ENCODE measurements at regions of chr4 and their contacts with region 1.

Region 1: DNA sequence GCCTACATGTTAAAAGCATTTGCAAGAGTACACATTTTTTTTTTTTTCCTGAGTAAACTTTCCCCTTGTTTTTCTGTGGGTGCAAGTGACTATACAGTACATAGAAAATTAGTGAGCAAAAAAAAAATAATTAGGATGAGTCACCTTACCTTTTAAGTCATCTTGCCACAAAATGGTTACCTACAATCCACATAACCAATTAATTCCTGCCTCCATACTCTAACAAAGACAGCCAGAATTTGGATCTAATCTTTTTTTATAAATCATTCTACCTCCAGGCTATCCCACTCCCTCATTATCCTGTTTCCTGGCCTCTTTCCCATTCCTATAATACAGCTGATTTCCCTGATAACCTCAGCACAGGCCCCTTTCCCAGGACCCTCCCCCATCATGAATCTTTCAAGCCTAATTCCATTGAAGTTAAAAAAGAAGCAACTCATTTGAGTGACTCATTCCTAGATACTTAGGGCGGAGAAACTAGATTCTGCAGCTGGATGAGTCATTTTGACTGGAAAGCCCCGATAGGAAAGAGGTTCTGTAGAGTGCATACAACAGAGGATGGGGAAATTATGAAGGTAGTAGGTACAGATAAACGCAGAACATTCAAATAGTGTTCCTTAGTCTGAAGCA is 128.2 kb downstream of the C4orf51 start:
- DNase-seq: peak; percentile 34
- H3K4me3 Mint-ChIP-seq: peak overlapping the region; percentile 57
- H3K27ac Mint-ChIP-seq: peak overlapping the region; percentile 97
- H3K4me1 Mint-ChIP-seq: peaks cover 54% of the 10 kb centered on the region
- H3K27me3 Mint-ChIP-seq: no peaks in the 10 kb centered on the region

Region 2: DNA sequence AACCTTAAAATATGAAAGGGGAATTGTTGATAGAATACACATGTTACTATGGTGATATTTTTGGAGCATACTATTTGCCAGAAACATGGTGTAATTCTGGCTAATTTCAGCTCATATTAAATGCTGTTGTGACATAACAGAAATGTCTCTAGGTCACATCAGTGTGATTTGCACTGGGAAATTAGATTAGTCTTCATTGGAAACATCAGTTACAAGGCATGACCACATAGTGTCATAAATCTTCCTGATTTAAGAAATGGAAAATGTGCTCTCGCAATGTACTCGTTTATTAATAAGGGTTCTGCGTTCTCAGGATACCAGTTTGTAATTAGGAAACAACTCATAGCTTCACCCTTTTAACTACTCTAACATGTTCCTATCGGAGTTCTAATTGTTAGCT is 1594.8 kb before region 1 on chr4:
- intact Hi-C with region 1: no loop called
- DNase-seq: no peak
- H3K4me3 Mint-ChIP-seq: no peak overlapping the region
- H3K27ac Mint-ChIP-seq: no peak overlapping the region
- H3K4me1 Mint-ChIP-seq: no peaks in the 10 kb centered on the region
- H3K27me3 Mint-ChIP-seq: no peaks in the 10 kb centered on the region

Region 3: DNA sequence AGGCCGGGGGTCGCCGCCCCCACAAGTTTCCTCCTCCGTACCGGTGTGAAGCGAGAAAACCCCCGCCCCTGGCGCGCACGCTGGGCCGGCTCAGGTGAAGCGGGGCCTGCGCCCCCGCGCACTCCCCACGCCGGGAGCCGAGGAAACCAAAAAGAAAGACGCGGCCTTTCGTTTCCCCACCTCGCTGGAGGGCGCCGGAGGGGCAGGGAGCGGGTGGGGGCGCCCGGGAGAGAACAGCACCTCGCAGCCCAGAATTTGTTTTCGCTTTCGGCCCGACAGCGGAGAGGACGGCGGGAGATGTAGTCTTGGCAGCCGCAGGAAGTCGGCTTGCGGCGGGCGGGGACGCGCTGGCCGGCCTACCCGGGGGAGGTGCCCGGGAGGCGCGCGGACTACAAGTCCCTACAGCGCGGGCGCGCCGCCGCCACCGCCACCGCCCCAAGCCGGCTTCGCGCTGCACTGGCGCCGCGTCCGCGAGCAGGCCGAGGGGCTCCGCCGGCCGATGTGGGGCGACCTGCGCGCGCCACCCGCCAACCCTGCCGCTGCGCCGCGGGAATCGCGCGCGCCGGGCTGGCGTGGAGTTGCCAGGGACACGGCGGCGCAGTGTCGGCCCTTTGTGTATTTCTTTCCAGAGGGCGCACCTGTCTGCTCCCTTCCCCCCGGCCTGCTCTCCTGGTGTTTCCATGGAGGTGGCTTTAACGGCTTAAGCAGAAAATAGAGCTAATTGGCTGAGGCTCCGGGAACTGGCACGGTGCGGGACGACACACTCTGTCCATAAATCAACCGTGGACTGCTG is 627.6 kb before region 1 on chr4 and contains the start of gene OTUD4:
- intact Hi-C with region 1: loop called (anchors 2 kb)
- DNase-seq: peak; percentile 94
- H3K4me3 Mint-ChIP-seq: peak within 1 kb of the TSS; percentile 96
- H3K27ac Mint-ChIP-seq: peak within 1 kb of the TSS; percentile 94
- H3K4me1 Mint-ChIP-seq: peaks cover 14% of the 10 kb centered on the region
- H3K27me3 Mint-ChIP-seq: no peaks in the 10 kb centered on the region
- total RNA-seq, gene OTUD4: 71.7 and 80.4 TPM in 2 replicates

Region 4: DNA sequence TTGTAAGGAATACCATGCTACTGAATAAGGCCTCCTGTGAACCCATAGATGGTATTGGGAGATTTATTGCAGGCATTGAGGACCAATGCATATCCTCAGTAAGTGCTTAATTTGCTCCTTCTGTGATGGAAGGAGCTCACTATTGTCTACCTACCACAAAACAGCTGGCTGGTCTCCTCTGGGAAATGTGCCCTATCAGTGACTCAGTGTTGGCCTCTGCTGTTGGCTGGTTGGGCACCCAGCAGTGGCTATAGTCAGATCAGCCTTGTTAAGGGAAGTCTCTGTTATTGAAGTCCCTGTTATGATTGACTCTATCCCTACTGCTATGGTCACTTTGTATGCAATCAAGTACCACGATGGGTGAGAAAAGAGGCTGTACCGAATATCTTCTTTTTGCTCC is 600.2 kb before region 1 on chr4:
- intact Hi-C with region 1: no loop called
- DNase-seq: no peak
- H3K4me3 Mint-ChIP-seq: no peak overlapping the region
- H3K27ac Mint-ChIP-seq: no peak overlapping the region
- H3K4me1 Mint-ChIP-seq: no peaks in the 10 kb centered on the region
- H3K27me3 Mint-ChIP-seq: peaks cover 13% of the 10 kb centered on the region

Region 5: GRCh38 chr4:145732895-145733880 is 74.9 kb before region 1 on chr4:
- intact Hi-C with region 1: loop called (anchors 5 kb)
- DNase-seq: peak; percentile 81
- H3K4me3 Mint-ChIP-seq: peak overlapping the region; percentile 68
- H3K27ac Mint-ChIP-seq: peak overlapping the region; percentile 67
- H3K4me1 Mint-ChIP-seq: peaks cover 18% of the 10 kb centered on the region
- H3K27me3 Mint-ChIP-seq: no peaks in the 10 kb centered on the region

Region 6: GRCh38 chr4:145785391-145786008 is 22.6 kb before region 1 on chr4:
- intact Hi-C with region 1: loop called (anchors 1 kb)
- DNase-seq: no peak
- H3K4me3 Mint-ChIP-seq: no peak overlapping the region
- H3K27ac Mint-ChIP-seq: peak overlapping the region; percentile 95
- H3K4me1 Mint-ChIP-seq: peaks cover 42% of the 10 kb centered on the region
- H3K27me3 Mint-ChIP-seq: no peaks in the 10 kb centered on the region

Region 7: GRCh38 chr4:145936142-145936996 is 128.2 kb after region 1 on chr4:
- intact Hi-C with region 1: loop called (anchors 2 kb)
- DNase-seq: peak; percentile 58
- H3K4me3 Mint-ChIP-seq: peak overlapping the region; percentile 94
- H3K27ac Mint-ChIP-seq: peak overlapping the region; percentile 96
- H3K4me1 Mint-ChIP-seq: peaks cover 44% of the 10 kb centered on the region
- H3K27me3 Mint-ChIP-seq: no peaks in the 10 kb centered on the region

Region 8: DNA sequence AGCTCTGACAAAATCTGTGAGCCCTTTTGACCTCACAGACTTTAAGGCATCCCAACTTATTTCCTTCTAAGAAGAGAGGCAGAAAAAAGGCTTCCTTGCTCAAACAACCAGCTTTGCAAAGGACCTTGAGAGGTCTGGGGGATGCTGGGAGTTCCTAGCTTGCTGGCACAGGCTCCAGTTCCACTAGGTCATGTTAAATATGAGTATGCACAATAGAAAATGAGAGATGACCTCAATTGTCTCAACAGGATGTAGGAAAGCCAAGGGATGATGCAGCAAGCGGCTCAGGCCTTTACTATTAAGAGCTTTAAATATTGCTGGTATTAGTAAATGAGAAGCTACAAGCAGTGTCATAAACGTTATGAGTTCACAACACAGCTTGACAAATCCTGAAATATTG is 143.8 kb after region 1 on chr4:
- intact Hi-C with region 1: no loop called
- DNase-seq: no peak
- H3K4me3 Mint-ChIP-seq: no peak overlapping the region
- H3K27ac Mint-ChIP-seq: no peak overlapping the region
- H3K4me1 Mint-ChIP-seq: peaks cover 3% of the 10 kb centered on the region
- H3K27me3 Mint-ChIP-seq: peaks cover 31% of the 10 kb centered on the region

Region 9: GRCh38 chr4:146175541-146176453 is 367.7 kb after region 1 on chr4 and contains the start of gene LSM6:
- intact Hi-C with region 1: loop called (anchors 10 kb)
- DNase-seq: peak; percentile 78
- H3K4me3 Mint-ChIP-seq: peak within 1 kb of the TSS; percentile 86
- H3K27ac Mint-ChIP-seq: peak within 1 kb of the TSS; percentile 71
- H3K4me1 Mint-ChIP-seq: peaks cover 37% of the 10 kb centered on the region
- H3K27me3 Mint-ChIP-seq: no peaks in the 10 kb centered on the region
- total RNA-seq, gene LSM6: 67.2 and 74.1 TPM in 2 replicates

Measured in activated T-helper 2 cell treated with anti-CD3 and anti-CD28 coated beads, Interferon-gamma antibody, Interleukin-2, Interleukin-4, amounts not matched to agents 10 μg/mL and 5 μg/mL and 100 μg/mL, durations not matched to agents 14 hours and 24 hours and 36 hours (primary cell).